K562 (cell line): ENCODE measurements at regions of chr3 and their contacts with region 1.

Region 1: DNA sequence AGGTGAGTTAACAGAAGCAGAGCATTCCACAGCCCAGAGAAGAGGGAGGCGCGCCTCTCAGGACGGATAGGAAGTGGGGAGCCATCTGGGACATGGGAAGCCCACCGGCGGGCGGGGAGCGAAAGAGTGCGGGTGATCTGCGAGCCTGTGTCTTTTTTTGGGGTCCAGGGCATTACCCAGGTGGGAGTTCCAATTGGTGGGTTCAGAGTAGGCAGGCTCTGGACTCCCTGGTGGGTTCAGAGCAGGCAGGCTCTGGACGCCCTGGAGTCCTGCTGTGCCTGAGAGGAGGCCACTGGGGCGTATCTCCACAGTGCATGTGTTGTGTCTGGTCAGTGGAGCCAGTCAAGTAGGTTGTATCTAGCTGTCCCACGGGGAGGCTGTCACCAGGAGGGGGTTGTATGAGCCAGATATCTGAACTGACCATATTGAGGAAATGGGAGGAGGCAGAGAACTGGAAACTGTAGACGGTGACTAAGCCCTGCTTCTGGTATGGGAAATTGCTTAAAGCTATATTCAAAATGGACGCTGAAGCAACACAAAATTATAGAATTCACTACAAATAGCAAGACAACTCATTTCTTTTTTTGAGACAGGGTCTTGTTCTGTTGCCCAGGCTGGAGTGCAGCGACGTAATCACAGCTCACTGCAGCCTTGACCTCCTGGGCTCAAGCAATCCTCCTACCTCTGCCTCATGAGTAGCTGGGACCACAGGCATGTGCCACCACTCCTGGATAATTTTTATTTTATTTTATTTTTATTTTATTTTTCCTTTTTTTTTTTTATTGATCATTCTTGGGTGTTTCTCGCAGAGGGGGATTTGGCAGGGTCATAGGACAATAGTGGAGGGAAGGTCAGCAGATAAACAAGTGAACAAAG is 34.5 kb upstream of the CHST2 start:
- DNase-seq: peak; percentile 98 to 99 (median 98)
- ATAC-seq: peak; percentile 97
- H3K4me3 ChIP-seq: no peak overlapping the region
- H3K27ac ChIP-seq: peak overlapping the region; percentile 100
- H3K4me1 ChIP-seq: peaks cover 28 to 37% of the 10 kb centered on the region in 2 experiments; a peak in 4 of 5 replicates
- H3K27me3 ChIP-seq: no peaks in the 10 kb centered on the region
- CTCF ChIP-seq: peak in 1 of 3 experiments; percentile 38; a peak in 2 of 6 replicates
- EP300 ChIP-seq: peak; percentile 99
- POLR2A ChIP-seq: peak; percentile 55; the same call in 1 of the 2 replicates
- RAD21 ChIP-seq: peak; percentile 55

Region 2: GRCh38 chr3:143119009-143119914 is 34.2 kb after region 1 on chr3 and contains the start of gene CHST2:
- CTCF ChIA-PET with region 1: no interaction called
- POLR2A ChIA-PET with region 1: interaction called, 7 read pairs
- in situ Hi-C with region 1: no loop called
- intact Hi-C with region 1: loop called (anchors 2 kb)
- DNase-seq: peak; percentile 89 to 97 (median 95)
- ATAC-seq: peak; percentile 89
- H3K4me3 ChIP-seq: peak within 1 kb of the TSS; percentile 89
- H3K27ac ChIP-seq: peak within 1 kb of the TSS; percentile 99
- H3K4me1 ChIP-seq: peaks cover 32 to 34% of the 10 kb centered on the region in 2 experiments; a peak in 4 of 5 replicates
- H3K27me3 ChIP-seq: no peaks in the 10 kb centered on the region
- CTCF ChIP-seq: no peak
- EP300 ChIP-seq: peak; percentile 61; the same call in 1 of the 2 replicates
- POLR2A ChIP-seq: peak; percentile 91
- RAD21 ChIP-seq: peak in 1 of 2 experiments; percentile 16; a peak in 2 of 4 replicates
- polyA plus RNA-seq, gene CHST2: 3.4 to 3.7 TPM

Region 3: GRCh38 chr3:143283432-143284128 is 198.5 kb after region 1 on chr3:
- CTCF ChIA-PET with region 1: no interaction called
- POLR2A ChIA-PET with region 1: no interaction called
- in situ Hi-C with region 1: no loop called
- intact Hi-C with region 1: loop called (anchors 1 kb)
- DNase-seq: peak; percentile 73 to 97 (median 86)
- ATAC-seq: peak; percentile 95
- H3K4me3 ChIP-seq: no peak overlapping the region
- H3K27ac ChIP-seq: peak overlapping the region; percentile 56
- H3K4me1 ChIP-seq: peaks cover 6 to 41% of the 10 kb centered on the region in 2 experiments; a peak in 3 of 5 replicates
- H3K27me3 ChIP-seq: no peaks in the 10 kb centered on the region
- CTCF ChIP-seq: 0 out of 6 replicates have a peak, but pooled peaks of 1 of the 3 experiments have one; percentile 3
- EP300 ChIP-seq: peak; percentile 89; the same call in 1 of the 2 replicates
- POLR2A ChIP-seq: no peak
- RAD21 ChIP-seq: no peak